ENCODE measurements at regions of chr12 and their contacts with region 1.

Region 1: GRCh38 chr12:56571126-56571525 is 49.5 kb downstream of the RBMS2 start:
- DNase-seq: no peak
- H3K4me3 ChIP-seq: peak overlapping the region in 3 of 59 donors; percentile 30 to 35 (median 30)
- H3K27ac ChIP-seq: peak overlapping the region in 28 of 59 donors; percentile 0 to 71 (median 50)
- H3K27me3 ChIP-seq: no peaks in the 10 kb centered on the region
- CTCF ChIP-seq: no peak

Region 2: GRCh38 chr12:56622535-56622934 is 51.4 kb after region 1 on chr12:
- intact Hi-C with region 1: no loop called
- DNase-seq: no peak
- H3K4me3 ChIP-seq: no peak overlapping the region
- H3K27ac ChIP-seq: no peak overlapping the region
- H3K27me3 ChIP-seq: no peaks in the 10 kb centered on the region
- CTCF ChIP-seq: no peak

Region 3: DNA sequence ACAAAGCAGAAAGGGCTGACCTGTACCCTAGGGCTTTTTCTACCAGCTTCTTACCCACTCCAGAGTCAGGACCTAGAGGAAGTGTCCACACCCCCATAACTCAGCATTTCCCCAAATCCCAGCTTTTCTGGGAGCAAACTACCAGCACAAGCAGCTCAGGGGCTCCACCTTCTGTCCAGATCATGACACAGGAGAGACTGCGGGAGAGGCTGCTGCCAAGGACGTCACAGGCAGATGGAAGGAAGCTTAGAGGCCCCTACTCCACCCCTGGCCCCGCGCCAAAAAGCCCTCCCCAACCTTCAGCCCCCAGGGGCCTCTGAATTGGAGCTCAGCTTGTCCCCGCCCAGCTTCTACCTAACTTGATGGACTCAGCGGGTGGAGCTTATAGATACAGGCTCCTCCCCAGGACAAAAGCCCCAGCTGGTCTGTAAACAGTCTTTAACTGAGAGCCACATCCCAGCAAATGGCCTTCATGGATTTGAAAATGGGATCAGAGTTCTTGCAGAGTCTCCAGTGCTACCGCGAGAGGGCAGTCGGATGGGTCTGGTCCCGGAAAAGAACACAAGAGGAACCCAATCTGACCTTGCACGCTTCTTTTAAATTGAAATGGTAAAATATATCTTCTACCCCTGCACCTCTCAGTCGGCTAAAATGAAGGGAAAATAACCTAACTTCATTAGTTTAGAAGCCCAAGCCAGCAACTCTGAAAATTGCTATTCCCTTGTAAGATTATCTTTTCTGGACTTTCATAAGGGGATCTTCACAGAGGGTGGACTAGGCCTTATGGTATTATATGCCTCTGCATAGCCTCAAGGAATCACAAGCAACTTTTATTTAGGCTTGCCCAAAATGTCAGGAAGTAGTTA is 65.8 kb after region 1 on chr12:
- intact Hi-C with region 1: loop called in 1 of 2 experiments (anchors 5 kb)
- DNase-seq: peak; percentile 83 to 98 (median 95)
- H3K4me3 ChIP-seq: peak overlapping the region; percentile 46 to 87 (median 78)
- H3K27ac ChIP-seq: peak overlapping the region; percentile 87 to 99 (median 95)
- H3K27me3 ChIP-seq: no peaks in the 10 kb centered on the region
- CTCF ChIP-seq: peak; percentile 32 to 90 (median 72)